ENCODE measurements at regions of chr1 and their contacts with region 1.

Region 1: DNA sequence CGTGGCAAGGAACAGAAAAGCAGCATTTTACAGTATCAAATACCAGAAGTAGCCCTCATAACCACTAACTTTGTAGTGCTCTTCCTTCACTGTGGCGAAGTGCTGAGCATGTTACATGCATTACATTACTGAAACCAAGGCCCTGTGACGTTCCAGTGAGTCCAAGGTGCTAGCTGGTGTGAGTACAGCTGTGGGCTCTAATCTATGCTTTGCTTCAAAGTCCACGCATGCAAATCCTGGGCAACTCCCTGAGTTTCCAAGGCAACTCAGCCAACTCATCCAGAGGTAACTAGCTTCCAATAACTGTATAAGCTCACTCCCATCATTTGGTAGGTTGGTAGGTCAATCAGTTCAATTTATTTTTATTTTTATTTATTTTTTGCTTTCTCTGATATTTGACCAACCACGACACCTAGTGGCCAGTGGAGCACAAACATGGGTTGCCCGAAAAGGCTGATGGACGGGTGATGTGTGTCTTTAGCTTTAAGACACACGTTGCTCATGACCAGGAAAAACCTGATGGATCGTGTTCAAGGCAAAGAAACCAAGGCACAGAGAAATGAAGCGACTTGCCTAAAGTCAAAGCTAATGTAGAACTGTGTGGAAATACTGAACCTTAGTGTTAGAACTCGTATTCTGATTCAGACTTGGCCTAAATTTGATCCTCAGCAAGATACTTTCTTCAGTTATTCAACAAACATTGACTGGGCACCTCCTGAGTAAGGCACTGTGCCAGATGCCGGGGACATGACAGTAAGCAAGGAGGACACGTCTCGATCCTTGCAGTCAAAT is 73.0 kb downstream of the GNG12 start:
- DNase-seq: peak in 1 of 2 donors; percentile 65
- H3K4me3 ChIP-seq: no peak overlapping the region
- H3K27ac ChIP-seq: peak overlapping the region; percentile 48 to 64
- H3K4me1 ChIP-seq: peaks cover 5 to 63% (median 37%) of the 10 kb centered on the region in 4 donors
- H3K27me3 ChIP-seq: no peaks in the 10 kb centered on the region
- CTCF ChIP-seq: peak; percentile 82 to 85

Region 2: DNA sequence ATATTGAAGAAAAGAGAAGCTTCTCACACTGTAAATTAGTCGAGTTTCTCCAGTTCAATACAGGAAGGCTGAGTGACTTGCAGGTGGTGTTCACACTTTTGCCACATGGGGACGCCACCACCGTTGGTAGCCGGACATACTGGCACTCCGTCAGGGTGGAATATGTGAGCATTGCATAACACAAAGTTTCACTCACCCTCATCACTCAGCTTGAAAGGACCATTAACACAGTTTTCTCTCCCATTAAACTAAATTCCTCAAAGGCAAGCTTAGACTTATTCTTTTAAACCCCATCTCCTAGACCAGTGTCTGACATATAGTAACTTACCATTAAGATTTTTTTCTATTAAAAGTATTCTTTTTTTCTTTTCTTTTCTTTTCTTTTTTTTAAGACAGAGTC is 224.8 kb before region 1 on chr1:
- intact Hi-C with region 1: loop called (anchors 2 kb)
- DNase-seq: peak; percentile 84 to 89
- H3K4me3 ChIP-seq: no peak overlapping the region
- H3K27ac ChIP-seq: no peak overlapping the region
- H3K4me1 ChIP-seq: peaks cover 0 to 19% (median 11%) of the 10 kb centered on the region in 4 donors
- H3K27me3 ChIP-seq: no peaks in the 10 kb centered on the region
- CTCF ChIP-seq: peak; percentile 96 to 98

Region 3: GRCh38 chr1:67674260-67675011 is 85.8 kb before region 1 on chr1:
- intact Hi-C with region 1: loop called (anchors 5 kb)
- DNase-seq: no peak
- H3K4me3 ChIP-seq: no peak overlapping the region
- H3K27ac ChIP-seq: no peak overlapping the region
- H3K4me1 ChIP-seq: no peaks in the 10 kb centered on the region
- H3K27me3 ChIP-seq: no peaks in the 10 kb centered on the region
- CTCF ChIP-seq: no peak

Region 4: GRCh38 chr1:67723620-67724019 is 36.6 kb before region 1 on chr1:
- intact Hi-C with region 1: no loop called
- DNase-seq: no peak
- H3K4me3 ChIP-seq: no peak overlapping the region
- H3K27ac ChIP-seq: peak overlapping the region; percentile 64 to 74
- H3K4me1 ChIP-seq: peaks cover 0 to 76% (median 43%) of the 10 kb centered on the region in 4 donors
- H3K27me3 ChIP-seq: no peaks in the 10 kb centered on the region
- CTCF ChIP-seq: no peak

Region 5: GRCh38 chr1:68111519-68112436 is 351.6 kb after region 1 on chr1:
- intact Hi-C with region 1: loop called (anchors 5 kb)
- DNase-seq: peak; percentile 40 to 79
- H3K4me3 ChIP-seq: no peak overlapping the region
- H3K27ac ChIP-seq: no peak overlapping the region
- H3K4me1 ChIP-seq: peaks cover 0 to 19% (median 15%) of the 10 kb centered on the region in 4 donors
- H3K27me3 ChIP-seq: no peaks in the 10 kb centered on the region
- CTCF ChIP-seq: peak; percentile 66 to 70

Region 6: DNA sequence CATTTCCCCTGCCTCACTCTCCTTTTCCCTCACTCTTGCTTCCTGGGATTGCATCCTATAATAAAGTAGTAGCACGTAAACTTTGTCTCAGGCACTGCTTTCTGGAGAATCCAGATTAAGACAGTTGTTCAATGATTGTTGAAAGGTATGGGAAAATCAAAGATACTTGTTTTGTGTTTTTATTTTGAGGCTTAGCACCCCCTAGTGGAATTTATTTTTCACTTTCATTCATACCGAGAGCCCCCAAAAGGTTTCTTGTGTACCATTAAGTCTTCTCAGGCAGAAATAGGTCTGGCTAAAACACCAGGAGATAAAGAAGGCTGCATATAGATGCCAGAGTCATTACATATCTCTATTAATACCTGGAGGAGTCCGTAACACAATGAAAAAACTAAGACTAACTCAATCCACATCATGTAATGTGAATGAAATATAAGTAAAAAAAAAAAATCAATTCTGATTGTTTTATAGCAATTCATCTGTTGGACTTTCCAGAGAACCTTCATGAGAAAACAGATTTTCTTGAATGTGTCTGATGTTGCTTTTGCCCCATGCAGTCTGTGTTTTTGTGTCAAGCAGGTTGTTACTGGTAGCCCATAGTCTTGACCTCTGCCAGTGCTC is 586.1 kb after region 1 on chr1:
- intact Hi-C with region 1: loop called (anchors 10 kb)
- DNase-seq: no peak
- H3K4me3 ChIP-seq: no peak overlapping the region
- H3K27ac ChIP-seq: no peak overlapping the region
- H3K4me1 ChIP-seq: peaks cover 0 to 5% (median 2%) of the 10 kb centered on the region in 4 donors
- H3K27me3 ChIP-seq: no peaks in the 10 kb centered on the region
- CTCF ChIP-seq: peak; percentile 30 to 39

Measured in tibial artery (tissue), 4 donors.